B cell (primary cell): ENCODE measurements at regions of chr19 and their contacts with region 1.

Region 1: DNA sequence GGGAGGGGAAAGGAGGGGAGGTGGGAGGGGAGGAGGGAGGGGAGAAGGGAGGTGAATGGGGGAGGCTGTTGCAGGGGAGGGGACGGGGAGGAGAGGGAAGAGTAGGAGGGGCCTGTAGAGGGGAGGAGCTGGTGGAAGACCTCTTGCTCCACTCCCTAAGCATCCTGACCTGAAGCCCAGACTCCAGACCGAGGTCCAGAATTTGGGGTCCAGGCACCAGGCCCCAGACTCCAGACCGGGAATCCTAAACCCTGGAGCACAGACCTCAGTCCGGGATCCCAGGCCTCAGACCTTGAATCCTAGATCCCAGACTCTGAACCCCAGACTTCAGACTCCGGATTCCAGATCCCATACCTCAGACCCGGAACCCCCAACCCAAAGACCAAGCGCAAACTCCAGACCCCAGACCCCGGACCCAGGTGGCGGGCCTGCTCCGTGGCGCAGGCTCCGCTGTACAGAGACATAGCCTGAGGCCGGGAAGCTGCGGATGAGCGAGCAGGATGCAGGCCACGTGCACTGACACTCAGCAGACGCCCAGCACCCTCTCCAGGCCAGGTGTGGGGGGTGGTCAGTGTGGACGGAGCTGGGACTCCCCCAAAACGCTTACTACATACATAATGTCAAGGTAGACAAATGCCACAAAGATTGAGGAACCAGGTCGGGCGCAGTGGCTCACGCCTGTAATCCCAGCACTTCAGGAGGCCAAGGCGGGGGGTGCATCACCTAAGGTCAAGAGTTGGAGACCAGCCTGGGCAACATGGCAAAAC is 710 bp upstream of the BTBD2 start:
- DNase-seq: peak; percentile 67
- ATAC-seq: peak; percentile 72
- H3K4me3 ChIP-seq: peak overlapping the region in 3 of 5 experiments; percentile 28 to 44 (median 39)
- H3K4me3 Mint-ChIP-seq: peak overlapping the region; percentile 47
- H3K27ac ChIP-seq: peak overlapping the region in 1 of 2 donors; percentile 7
- H3K27ac Mint-ChIP-seq: peak overlapping the region; percentile 41
- H3K4me1 ChIP-seq: peaks cover 15 to 24% of the 10 kb centered on the region in 2 donors
- H3K4me1 Mint-ChIP-seq: peaks cover 25% of the 10 kb centered on the region
- H3K27me3 ChIP-seq: no peaks in the 10 kb centered on the region
- H3K27me3 Mint-ChIP-seq: no peaks in the 10 kb centered on the region
- CTCF ChIP-seq: no peak

Region 2: GRCh38 chr19:1929021-1929742 is 87.0 kb before region 1 on chr19:
- CTCF ChIA-PET with region 1: interaction called, 14 read pairs
- POLR2A ChIA-PET with region 1: no interaction called
- intact Hi-C with region 1: loop called (anchors 2 kb)
- DNase-seq: peak; percentile 87
- ATAC-seq: peak; percentile 80
- H3K4me3 ChIP-seq: peak overlapping the region in 4 of 5 experiments; percentile 40 to 63 (median 48)
- H3K4me3 Mint-ChIP-seq: peak overlapping the region; percentile 84
- H3K27ac ChIP-seq: no peak overlapping the region
- H3K27ac Mint-ChIP-seq: peak overlapping the region; percentile 80
- H3K4me1 ChIP-seq: peaks cover 33 to 47% of the 10 kb centered on the region in 2 donors
- H3K4me1 Mint-ChIP-seq: peaks cover 44% of the 10 kb centered on the region
- H3K27me3 ChIP-seq: no peaks in the 10 kb centered on the region
- H3K27me3 Mint-ChIP-seq: no peaks in the 10 kb centered on the region
- CTCF ChIP-seq: peak; percentile 96

Region 3: DNA sequence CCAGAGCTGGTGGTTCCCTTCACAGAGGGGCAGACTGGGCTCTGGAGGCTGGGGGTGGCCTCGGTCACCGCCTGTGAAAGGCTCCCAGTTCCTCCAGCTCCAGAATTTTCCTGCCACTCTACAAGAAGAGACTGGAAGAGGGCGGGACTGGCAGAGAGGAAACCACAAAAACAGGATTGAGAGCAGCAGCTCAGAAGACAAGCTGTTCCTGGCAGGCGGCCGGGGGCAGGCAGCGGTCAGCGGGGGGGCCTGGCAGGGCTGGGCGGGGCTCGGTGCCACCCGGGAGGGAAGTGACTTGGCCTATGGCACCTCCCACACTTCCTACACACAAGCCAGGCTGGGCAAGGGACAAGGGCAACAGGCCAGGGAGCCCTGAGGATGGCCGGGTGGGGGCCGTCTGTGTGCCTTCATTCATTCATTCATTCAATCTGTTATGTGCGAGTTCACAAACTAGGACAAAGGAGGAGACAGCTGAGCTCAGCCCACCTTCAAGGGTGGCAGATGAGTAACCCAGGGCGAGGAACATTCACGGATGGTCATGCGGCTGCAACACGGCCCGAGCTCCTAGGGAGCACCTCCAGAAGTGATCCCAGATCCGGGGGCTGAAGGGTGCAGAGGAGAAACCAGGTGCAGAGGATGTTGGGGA is 16.2 kb after region 1 on chr19:
- CTCF ChIA-PET with region 1: interaction called, 11 read pairs
- POLR2A ChIA-PET with region 1: interaction called, 7 read pairs
- intact Hi-C with region 1: no loop called
- DNase-seq: peak; percentile 54
- ATAC-seq: peak; percentile 50
- H3K4me3 ChIP-seq: peak overlapping the region in 2 of 5 experiments; percentile 9 to 50
- H3K4me3 Mint-ChIP-seq: peak overlapping the region; percentile 63
- H3K27ac ChIP-seq: peak overlapping the region; percentile 16 to 29
- H3K27ac Mint-ChIP-seq: peak overlapping the region; percentile 62
- H3K4me1 ChIP-seq: peaks cover 17 to 34% of the 10 kb centered on the region in 2 donors
- H3K4me1 Mint-ChIP-seq: peaks cover 26% of the 10 kb centered on the region
- H3K27me3 ChIP-seq: no peaks in the 10 kb centered on the region
- H3K27me3 Mint-ChIP-seq: no peaks in the 10 kb centered on the region
- CTCF ChIP-seq: no peak

Region 4: GRCh38 chr19:2061495-2062381 is 45.5 kb after region 1 on chr19:
- CTCF ChIA-PET with region 1: interaction called, 13 read pairs
- POLR2A ChIA-PET with region 1: interaction called, 6 read pairs
- intact Hi-C with region 1: no loop called
- DNase-seq: peak; percentile 99
- ATAC-seq: peak; percentile 92
- H3K4me3 ChIP-seq: peak overlapping the region; percentile 8 to 94 (median 84)
- H3K4me3 Mint-ChIP-seq: peak overlapping the region; percentile 95
- H3K27ac ChIP-seq: peak overlapping the region; percentile 92 to 97
- H3K27ac Mint-ChIP-seq: peak overlapping the region; percentile 95
- H3K4me1 ChIP-seq: peaks cover 30 to 67% of the 10 kb centered on the region in 2 donors
- H3K4me1 Mint-ChIP-seq: peaks cover 44% of the 10 kb centered on the region
- H3K27me3 ChIP-seq: no peaks in the 10 kb centered on the region
- H3K27me3 Mint-ChIP-seq: no peaks in the 10 kb centered on the region
- CTCF ChIP-seq: no peak

Region 5: GRCh38 chr19:2207991-2208860 is 192.0 kb after region 1 on chr19:
- CTCF ChIA-PET with region 1: no interaction called
- POLR2A ChIA-PET with region 1: interaction called, 10 read pairs
- intact Hi-C with region 1: no loop called
- DNase-seq: peak; percentile 55
- ATAC-seq: peak; percentile 78
- H3K4me3 ChIP-seq: no peak overlapping the region
- H3K4me3 Mint-ChIP-seq: no peak overlapping the region
- H3K27ac ChIP-seq: no peak overlapping the region
- H3K27ac Mint-ChIP-seq: no peak overlapping the region
- H3K4me1 ChIP-seq: peaks cover 0 to 6% of the 10 kb centered on the region in 2 donors
- H3K4me1 Mint-ChIP-seq: peaks cover 5% of the 10 kb centered on the region
- H3K27me3 ChIP-seq: no peaks in the 10 kb centered on the region
- H3K27me3 Mint-ChIP-seq: no peaks in the 10 kb centered on the region
- CTCF ChIP-seq: no peak

Region 6: DNA sequence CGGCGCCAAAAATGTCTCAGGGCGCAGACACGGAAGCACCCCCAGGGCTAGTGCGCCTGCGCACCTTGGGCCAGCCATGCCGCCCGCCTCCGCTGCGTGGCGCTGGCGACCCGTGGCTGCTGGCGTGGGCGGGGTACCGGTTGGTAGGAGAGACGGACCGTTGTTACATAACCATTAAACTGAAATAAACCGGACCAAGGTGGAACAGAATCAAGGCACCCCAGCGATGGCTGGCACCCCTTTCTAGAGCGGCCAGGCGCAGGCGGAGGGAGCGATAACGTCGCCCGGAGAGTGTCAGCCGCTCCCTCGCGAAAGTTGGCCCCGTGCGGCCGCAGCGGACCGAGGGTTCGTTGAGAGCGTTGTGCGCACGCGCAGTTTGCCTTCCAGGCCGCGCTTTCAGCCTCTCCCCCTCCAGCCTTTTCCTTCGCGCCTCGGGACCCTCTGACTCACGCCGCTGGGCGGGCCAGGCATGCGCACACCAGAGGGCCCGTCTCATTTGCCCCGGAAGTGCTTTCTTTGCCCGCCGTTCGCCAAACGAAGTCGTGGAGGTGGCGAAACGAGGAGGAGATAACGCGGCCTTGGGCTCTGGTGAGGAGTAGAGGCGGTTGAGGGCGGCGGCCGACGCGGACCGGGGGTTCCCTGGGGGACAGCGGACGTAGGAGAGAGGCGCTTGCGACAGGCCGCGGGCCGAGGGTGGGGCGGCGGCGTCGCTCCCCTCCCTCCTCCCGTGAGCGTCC is 220.3 kb after region 1 on chr19 and contains the starts of genes PLEKHJ1 and SF3A2:
- CTCF ChIA-PET with region 1: no interaction called
- POLR2A ChIA-PET with region 1: no interaction called
- intact Hi-C with region 1: no loop called
- DNase-seq: peak; percentile 99
- ATAC-seq: peak; percentile 83
- H3K4me3 ChIP-seq: peak within 1 kb of the TSS; percentile 19 to 94 (median 70)
- H3K4me3 Mint-ChIP-seq: peak within 1 kb of the TSS; percentile 93
- H3K27ac ChIP-seq: peak within 1 kb of the TSS; percentile 97 to 99
- H3K27ac Mint-ChIP-seq: peak within 1 kb of the TSS; percentile 98
- H3K4me1 ChIP-seq: peaks cover 46 to 66% of the 10 kb centered on the region in 2 donors
- H3K4me1 Mint-ChIP-seq: peaks cover 65% of the 10 kb centered on the region
- H3K27me3 ChIP-seq: no peaks in the 10 kb centered on the region
- H3K27me3 Mint-ChIP-seq: no peaks in the 10 kb centered on the region
- CTCF ChIP-seq: peak; percentile 98
- total RNA-seq, gene PLEKHJ1: 82.4 and 86.7 TPM in 2 replicates
- total RNA-seq, gene SF3A2: 129 and 140 TPM in 2 replicates